PC-3 (cell line): ENCODE measurements at regions of chr4 and their contacts with region 1.

Region 1: DNA sequence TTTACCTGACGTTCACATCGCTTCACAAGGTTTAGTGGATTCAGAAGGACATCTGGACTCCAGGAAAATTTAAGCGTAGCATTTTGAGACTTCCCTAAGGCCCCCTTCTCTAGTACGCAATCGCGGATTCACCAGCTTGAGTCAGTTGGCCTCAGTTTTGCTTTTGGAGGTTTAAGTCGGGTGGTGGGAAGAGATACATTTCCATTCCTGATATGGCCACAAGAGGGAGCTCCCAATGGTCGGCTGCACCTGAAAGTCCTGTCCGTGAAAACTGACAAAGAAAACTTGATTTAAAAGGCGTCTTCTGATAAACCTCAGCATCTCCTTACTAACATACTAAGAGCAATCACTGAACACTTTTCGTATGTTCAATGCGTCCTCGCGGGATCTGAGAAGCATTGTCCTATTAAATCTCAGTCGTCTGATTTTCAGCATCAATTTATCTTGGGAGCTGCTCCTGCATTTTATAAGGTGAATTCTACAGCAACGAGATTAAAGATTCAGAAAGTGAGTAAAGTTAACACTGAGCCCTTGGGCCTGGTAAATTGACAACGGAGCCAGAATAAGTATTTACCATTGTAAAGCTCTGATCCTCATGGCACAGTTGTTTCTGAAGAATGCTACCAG is 50.6 kb downstream of the LGI2 start:
- DNase-seq: peak; percentile 73
- ATAC-seq: peak; percentile 70
- H3K4me3 ChIP-seq: no peak overlapping the region; the same call in 1 of the 2 replicates
- H3K27ac ChIP-seq: no peak overlapping the region
- H3K4me1 ChIP-seq: no peaks in the 10 kb centered on the region
- H3K27me3 ChIP-seq: no peaks in the 10 kb centered on the region
- CTCF ChIP-seq: peak; percentile 82

Region 2: DNA sequence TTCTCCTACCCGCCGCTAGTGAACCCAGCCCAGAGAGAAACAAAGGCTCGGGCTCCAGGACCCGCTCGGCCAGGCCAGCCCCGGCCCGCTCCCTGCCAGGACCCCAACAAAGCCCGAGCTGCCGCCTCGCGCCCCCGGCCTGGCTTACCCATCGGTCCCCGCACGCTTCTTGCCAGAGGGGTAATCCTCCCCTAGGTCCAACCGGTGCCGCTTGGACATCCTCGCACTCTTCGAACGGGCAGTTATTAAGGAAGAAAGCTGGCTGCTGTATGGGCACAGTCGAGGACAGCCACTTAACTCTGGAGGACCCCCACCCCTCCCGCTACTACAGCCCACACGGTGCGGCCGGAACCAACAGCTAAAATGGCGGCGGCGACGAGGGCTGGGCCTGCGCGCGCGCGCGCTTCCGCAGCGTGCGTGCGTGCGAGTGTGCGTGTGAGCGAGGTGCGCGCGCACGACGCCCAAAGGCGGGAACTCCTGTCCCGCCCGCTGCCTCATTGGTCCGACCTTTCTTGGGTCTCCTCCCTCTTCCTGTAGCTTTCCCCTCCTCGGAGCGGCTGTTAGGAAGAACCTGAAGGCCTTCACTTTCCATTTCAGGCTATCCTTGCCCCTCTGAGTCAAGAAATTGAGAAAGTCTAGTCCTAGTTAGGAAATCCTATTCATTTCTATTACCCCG is 395.9 kb before region 1 on chr4 and contains the start of gene DHX15:
- CTCF ChIA-PET with region 1: no interaction called
- POLR2A ChIA-PET with region 1: no interaction called
- intact Hi-C with region 1: loop called (anchors 10 kb)
- DNase-seq: peak; percentile 91
- ATAC-seq: peak; percentile 91
- H3K4me3 ChIP-seq: peak within 1 kb of the TSS; percentile 90
- H3K27ac ChIP-seq: peak within 1 kb of the TSS; percentile 90
- H3K4me1 ChIP-seq: peaks cover 13% of the 10 kb centered on the region; the same call in 1 of the 2 replicates
- H3K27me3 ChIP-seq: no peaks in the 10 kb centered on the region
- CTCF ChIP-seq: no peak
- total RNA-seq, gene DHX15: 201 and 229 TPM in 2 replicates

Region 3: GRCh38 chr4:25144870-25145481 is 164.8 kb after region 1 on chr4:
- CTCF ChIA-PET with region 1: interaction called, 8 read pairs
- POLR2A ChIA-PET with region 1: no interaction called
- intact Hi-C with region 1: loop called (anchors 5 kb)
- DNase-seq: peak; percentile 61
- ATAC-seq: no peak
- H3K4me3 ChIP-seq: no peak overlapping the region
- H3K27ac ChIP-seq: no peak overlapping the region
- H3K4me1 ChIP-seq: no peaks in the 10 kb centered on the region
- H3K27me3 ChIP-seq: no peaks in the 10 kb centered on the region
- CTCF ChIP-seq: peak; percentile 73